ENCODE measurements at regions of chr2 and their contacts with region 1.

Region 1: DNA sequence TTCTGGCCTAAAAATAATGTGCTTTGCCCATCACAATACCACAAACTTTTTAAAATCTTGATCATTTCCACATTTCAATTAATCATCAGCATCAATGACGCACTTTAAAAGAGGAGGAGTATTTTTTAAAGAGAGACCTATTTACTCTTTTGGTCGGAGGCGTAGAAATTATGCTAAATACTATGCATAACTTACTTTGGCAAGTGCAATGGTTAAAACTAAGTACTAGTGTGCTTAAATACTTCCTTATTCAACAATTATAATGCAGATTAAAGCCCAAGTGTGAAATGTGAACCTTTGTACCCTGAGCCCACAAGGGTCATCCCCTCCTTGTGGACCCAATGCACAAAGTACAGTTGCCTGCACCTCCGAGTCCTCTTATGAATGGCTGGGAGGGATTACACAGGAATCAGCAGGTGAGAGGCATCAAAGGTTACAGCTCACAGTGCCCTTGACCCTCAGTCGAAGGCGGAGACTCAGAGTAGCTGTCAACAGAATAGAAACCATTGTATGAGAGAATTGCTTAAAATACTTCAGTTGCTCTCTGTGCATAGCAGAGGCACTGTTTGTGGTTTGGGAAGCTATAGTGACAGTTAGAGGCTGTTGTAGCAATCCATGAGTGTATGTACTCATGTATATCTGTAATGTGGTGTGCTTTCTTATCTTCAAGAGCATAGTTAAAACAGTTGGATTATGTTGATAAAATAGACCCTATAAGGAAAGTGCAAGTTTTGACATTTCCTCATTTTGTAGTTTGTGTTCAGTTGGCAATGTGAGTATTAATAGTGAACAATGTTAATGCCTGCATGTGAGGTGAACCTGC is 151.7 kb upstream of the ITGA4 start:
- DNase-seq: peak; percentile 68
- H3K4me3 Mint-ChIP-seq: peak overlapping the region; percentile 61
- H3K27ac Mint-ChIP-seq: peak overlapping the region; percentile 91
- H3K4me1 Mint-ChIP-seq: peaks cover 64% of the 10 kb centered on the region
- H3K27me3 Mint-ChIP-seq: no peaks in the 10 kb centered on the region

Region 2: DNA sequence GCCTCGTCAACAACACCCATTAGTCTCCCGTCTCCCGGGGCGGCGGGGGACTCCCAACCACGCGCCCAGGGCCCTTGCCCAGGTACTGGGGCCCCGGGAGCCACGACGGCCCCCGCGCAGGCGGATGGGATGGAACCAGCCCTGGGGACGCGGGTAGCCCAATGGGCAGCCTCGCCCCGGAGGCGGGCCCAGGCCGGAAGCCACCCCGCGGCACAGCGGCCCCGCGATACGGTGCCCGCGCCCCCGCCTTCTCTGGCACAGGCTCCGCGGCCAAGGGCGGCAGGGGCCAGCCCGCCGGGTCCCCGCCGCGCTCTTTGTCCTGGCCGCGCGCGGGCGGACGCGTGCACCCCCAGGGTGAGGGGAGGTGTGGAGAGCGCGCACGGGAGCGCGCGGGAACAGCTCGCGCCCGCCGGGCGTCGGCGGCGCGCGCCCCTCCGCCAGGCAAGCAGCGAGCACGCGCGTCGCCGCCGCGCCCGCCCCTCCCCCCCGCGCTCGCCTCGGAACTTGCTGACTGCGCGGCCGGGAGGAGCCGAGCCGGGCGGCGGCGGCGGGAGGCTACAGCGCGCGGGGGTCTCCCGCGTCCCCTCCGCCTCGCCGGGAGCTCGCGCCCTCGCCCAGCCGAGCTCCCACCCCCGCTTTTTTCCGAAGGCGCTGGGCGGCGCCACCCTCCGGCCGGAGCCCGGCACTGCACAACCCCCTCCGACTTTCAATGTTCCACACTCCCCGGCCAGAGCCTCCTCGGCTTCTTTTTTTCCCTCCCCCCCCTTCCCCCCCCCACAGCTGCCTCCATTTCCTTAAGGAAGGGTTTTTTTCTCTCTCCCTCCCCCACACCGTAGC is 325.2 kb before region 1 on chr2 and contains the start of gene UBE2E3:
- CTCF ChIA-PET with region 1: no interaction called
- intact Hi-C with region 1: loop called (anchors 5 kb)
- DNase-seq: peak; percentile 85
- H3K4me3 Mint-ChIP-seq: peak within 1 kb of the TSS; percentile 95
- H3K27ac Mint-ChIP-seq: peak within 1 kb of the TSS; percentile 91
- H3K4me1 Mint-ChIP-seq: peaks cover 29% of the 10 kb centered on the region
- H3K27me3 Mint-ChIP-seq: no peaks in the 10 kb centered on the region
- total RNA-seq, gene UBE2E3: 25.8 to 29.5 TPM

Region 3: DNA sequence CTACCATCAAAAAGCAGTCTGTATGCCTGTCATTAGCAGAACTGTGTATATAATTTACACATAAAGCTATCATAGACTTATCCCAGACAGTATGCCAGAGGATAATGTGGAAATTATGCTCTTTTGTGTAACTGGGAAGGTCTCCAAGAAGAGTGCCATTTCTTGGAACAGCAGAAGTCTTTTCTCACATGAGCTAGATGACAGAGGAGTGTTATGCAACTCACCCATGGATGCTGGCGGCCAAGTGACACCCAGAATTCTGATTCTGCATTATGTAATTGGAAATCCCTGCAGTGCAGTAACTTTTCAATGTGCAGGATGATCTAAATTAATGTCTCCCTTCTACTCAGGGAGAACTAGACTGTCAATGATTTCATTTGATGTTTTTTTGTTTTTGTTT is 165.1 kb before region 1 on chr2:
- CTCF ChIA-PET with region 1: no interaction called
- intact Hi-C with region 1: loop called (anchors 2 kb)
- DNase-seq: no peak
- H3K4me3 Mint-ChIP-seq: peak overlapping the region; percentile 68
- H3K27ac Mint-ChIP-seq: peak overlapping the region; percentile 65
- H3K4me1 Mint-ChIP-seq: peaks cover 63% of the 10 kb centered on the region
- H3K27me3 Mint-ChIP-seq: no peaks in the 10 kb centered on the region

Region 4: DNA sequence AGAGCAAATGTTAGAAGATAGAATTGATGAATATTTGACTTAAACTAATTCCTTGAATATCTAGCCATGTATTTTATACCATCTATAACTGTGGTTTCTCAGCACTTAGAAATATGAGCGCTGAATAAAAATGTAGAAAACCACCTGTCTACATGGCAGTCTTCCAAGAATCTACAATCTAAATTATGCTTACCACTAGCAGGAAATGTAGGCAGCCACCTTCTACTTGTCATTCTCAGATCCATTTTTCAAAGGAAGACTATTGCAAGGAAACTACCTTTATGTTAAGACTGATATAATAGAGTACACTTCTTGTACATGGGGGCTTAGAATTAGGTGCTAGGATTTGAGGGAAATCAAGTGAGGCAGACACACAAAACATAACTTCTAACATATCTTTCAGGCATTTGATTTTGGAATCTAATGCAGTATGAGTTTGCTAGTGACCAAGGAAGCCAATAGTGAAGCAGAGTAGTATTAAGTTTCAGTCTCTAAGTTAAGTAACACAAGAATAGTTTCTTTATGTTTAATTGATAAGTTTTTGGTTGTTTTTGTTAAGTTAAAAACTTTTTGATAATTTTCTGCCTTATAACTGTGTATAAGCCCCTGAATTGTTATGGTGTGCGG is 24.2 kb before region 1 on chr2:
- CTCF ChIA-PET with region 1: interaction called, 4 read pairs
- intact Hi-C with region 1: loop called (anchors 1 kb)
- DNase-seq: no peak
- H3K4me3 Mint-ChIP-seq: no peak overlapping the region
- H3K27ac Mint-ChIP-seq: peak overlapping the region; percentile 60
- H3K4me1 Mint-ChIP-seq: peaks cover 37% of the 10 kb centered on the region
- H3K27me3 Mint-ChIP-seq: no peaks in the 10 kb centered on the region

Region 5: DNA sequence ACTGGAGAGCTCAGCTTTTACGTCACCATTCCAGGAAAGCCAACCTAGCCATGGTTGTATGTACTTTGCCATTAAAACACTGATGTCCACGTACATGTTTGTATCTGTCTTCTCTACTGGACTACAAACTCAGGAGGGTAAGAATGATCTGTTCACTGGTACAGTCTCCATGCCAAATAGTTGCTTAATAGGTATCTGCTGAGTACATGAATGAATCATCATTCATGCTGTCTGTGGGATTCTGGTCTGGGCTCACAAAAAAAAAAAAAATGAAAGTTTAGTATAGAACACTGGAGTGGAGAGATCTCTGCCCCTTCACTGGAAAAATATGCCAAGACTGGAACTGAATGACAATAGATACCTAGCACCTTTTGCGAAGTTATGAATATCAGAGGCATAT is 49.1 kb after region 1 on chr2:
- CTCF ChIA-PET with region 1: no interaction called
- intact Hi-C with region 1: no loop called
- DNase-seq: no peak
- H3K4me3 Mint-ChIP-seq: no peak overlapping the region
- H3K27ac Mint-ChIP-seq: no peak overlapping the region
- H3K4me1 Mint-ChIP-seq: peaks cover 11% of the 10 kb centered on the region
- H3K27me3 Mint-ChIP-seq: no peaks in the 10 kb centered on the region

Region 6: DNA sequence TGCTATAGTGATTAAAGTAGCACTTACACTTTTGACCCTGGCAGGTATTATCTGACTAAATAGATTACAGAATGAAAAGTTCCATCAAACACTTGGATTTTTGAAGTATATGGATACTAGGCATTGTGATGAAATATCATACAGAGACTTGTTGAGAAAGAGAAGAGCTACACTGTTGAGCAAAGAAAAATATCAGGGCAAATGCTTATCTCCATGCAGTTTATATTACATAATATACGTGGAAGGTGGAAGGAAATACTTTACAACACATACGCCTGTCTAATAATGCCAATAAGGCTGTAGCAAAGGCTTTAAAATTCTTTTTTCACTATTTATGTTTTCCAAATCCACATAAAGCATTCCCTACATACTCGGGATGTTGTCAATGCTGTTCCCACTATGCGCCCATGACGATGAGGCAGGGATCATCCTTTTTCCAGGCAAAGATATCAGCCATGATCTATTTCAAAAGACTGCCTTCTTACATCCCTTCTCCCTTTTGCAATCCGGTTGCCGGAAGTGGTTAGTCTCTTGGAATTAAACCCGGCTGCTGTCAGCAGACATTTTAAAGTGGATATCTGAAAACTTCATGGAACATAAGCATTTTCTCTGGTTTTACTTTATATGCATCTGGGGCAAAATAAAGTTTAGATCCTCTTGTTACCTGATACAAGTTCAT is 59.1 kb after region 1 on chr2:
- CTCF ChIA-PET with region 1: no interaction called
- intact Hi-C with region 1: no loop called
- DNase-seq: no peak
- H3K4me3 Mint-ChIP-seq: no peak overlapping the region
- H3K27ac Mint-ChIP-seq: no peak overlapping the region
- H3K4me1 Mint-ChIP-seq: no peaks in the 10 kb centered on the region
- H3K27me3 Mint-ChIP-seq: no peaks in the 10 kb centered on the region

Region 7: DNA sequence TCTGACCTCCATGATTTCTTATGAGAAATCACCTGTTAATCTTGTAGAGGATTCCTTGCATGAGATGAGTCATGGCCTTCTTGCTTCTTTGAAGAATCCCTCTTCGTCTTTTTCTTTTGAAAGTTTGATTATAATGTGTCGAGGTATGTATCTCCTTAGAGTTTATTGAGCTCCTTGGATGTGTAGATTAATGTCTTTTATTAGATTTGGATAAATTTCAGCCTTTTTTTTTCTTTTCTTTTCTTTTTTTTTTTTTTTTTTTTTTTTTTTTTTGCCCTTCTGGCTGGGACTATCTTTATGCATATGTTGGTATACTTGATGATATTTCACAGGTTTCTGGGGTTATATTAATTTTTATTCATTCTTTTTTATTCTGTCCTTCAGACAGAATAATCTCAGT is 79.4 kb after region 1 on chr2:
- CTCF ChIA-PET with region 1: no interaction called
- intact Hi-C with region 1: no loop called
- DNase-seq: no peak
- H3K4me3 Mint-ChIP-seq: no peak overlapping the region
- H3K27ac Mint-ChIP-seq: no peak overlapping the region
- H3K4me1 Mint-ChIP-seq: no peaks in the 10 kb centered on the region
- H3K27me3 Mint-ChIP-seq: no peaks in the 10 kb centered on the region

Region 8: GRCh38 chr2:181457121-181457740 is 151.7 kb after region 1 on chr2 and contains the start of gene ITGA4:
- CTCF ChIA-PET with region 1: interaction called, 15 read pairs
- intact Hi-C with region 1: loop called (anchors 1 kb)
- DNase-seq: peak; percentile 88
- H3K4me3 Mint-ChIP-seq: peak within 1 kb of the TSS; percentile 92
- H3K27ac Mint-ChIP-seq: peak within 1 kb of the TSS; percentile 93
- H3K4me1 Mint-ChIP-seq: peaks cover 39% of the 10 kb centered on the region
- H3K27me3 Mint-ChIP-seq: no peaks in the 10 kb centered on the region
- total RNA-seq, gene ITGA4: 26.6 to 27.8 TPM

Region 9: DNA sequence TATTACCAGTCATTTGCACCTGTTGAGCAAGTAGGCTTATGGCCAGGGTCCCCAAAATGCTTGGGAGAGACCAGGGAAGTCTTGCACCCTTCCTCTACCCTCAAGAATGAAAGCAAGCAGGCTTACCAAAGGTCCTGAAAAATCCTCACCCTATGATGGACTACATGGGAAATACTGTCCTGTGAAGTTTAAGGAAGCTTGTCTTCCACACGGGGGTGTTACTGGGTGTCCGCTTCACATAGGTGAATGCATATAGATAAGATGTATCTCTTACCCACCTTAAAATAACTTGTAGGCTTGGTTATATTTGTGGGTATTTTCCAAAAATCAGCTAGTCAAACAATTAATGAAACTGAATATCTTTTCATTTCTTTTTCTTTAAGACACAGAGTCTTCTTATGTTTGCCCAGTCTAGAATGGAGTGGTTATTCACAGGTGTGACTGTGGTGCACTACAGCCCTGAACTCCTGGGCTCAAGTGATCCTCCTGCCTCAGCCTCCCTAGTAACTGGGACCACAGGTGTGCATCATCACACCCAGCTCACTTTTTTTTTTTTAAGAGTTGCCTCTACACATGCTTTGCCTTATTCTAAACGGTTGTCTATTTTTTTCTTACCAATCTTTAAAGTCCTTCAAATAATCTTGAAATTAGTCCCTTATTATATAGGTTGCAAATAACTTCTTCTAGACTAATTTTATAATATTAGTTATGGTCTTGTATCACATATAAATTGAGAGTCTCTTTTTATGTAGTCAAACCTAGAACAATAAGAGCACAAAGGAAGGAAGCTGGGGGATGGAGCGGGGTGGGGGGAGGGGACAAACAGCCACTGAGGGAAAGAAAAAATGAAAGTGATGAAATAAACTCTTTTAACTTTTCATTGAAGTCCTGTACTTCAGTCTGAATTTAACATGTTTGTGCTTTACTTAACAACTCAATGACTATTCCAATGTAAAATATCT is 302.4 kb after region 1 on chr2:
- CTCF ChIA-PET with region 1: no interaction called
- intact Hi-C with region 1: no loop called
- DNase-seq: peak; percentile 22
- H3K4me3 Mint-ChIP-seq: no peak overlapping the region
- H3K27ac Mint-ChIP-seq: peak overlapping the region; percentile 75
- H3K4me1 Mint-ChIP-seq: peaks cover 23% of the 10 kb centered on the region
- H3K27me3 Mint-ChIP-seq: no peaks in the 10 kb centered on the region

Region 10: GRCh38 chr2:181683518-181684453 is 378.3 kb after region 1 on chr2:
- CTCF ChIA-PET with region 1: no interaction called
- intact Hi-C with region 1: loop called (anchors 5 kb)
- DNase-seq: peak; percentile 27
- H3K4me3 Mint-ChIP-seq: peak overlapping the region; percentile 68
- H3K27ac Mint-ChIP-seq: no peak overlapping the region
- H3K4me1 Mint-ChIP-seq: peaks cover 47% of the 10 kb centered on the region
- H3K27me3 Mint-ChIP-seq: peaks cover 80% of the 10 kb centered on the region

Region 11: GRCh38 chr2:181891966-181892798 is 586.7 kb after region 1 on chr2:
- CTCF ChIA-PET with region 1: no interaction called
- intact Hi-C with region 1: loop called (anchors 5 kb)
- DNase-seq: peak; percentile 61
- H3K4me3 Mint-ChIP-seq: peak overlapping the region; percentile 94
- H3K27ac Mint-ChIP-seq: peak overlapping the region; percentile 81
- H3K4me1 Mint-ChIP-seq: peaks cover 28% of the 10 kb centered on the region
- H3K27me3 Mint-ChIP-seq: peaks cover 12% of the 10 kb centered on the region